ENCODE measurements at regions of chr17 and their contacts with region 1.

Region 1: DNA sequence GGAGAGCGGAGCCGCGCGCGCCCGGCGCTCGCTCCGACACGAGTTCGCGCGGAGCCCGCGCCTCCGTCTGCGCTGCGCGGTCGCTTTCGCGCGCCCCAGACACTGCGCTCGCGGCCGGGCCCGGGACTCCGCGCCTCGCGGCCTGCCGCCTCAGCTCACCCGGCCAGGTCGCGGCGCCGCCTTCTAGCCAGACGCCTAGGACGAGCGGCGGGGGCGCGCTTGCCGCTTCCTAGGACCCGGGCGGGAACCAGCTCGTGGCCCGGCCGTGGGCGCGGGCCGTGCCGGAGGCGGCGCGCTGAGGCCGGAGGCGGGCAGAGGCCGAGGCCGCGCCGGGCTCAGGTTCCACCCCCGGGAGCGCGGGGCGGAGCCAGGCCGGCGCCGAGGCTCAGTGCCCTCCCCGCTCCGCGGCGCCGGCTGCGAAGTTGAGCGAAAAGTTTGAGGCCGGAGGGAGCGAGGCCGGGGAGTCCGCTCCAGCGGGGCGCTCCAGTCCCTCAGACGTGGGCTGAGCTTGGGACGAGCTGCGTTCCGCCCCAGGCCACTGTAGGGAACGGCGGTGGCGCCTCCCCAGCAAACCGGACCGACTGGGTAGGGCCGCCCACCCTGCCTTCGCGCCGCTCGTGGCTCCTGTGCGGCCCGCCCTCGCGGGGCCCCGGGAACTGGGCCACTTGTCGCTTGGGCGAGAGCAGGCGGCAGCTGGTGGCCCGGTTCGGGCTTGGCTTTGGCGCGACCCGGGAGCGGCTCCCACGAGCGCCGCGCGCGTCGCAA is at the start of gene SPHK1:
- DNase-seq: peak; percentile 69 to 83
- H3K4me3 ChIP-seq: peak within 1 kb of the TSS; percentile 76
- H3K4me3 Mint-ChIP-seq: peak within 1 kb of the TSS; percentile 91
- H3K27ac Mint-ChIP-seq: peak within 1 kb of the TSS; percentile 23
- H3K4me1 ChIP-seq: peaks cover 14% of the 10 kb centered on the region
- H3K4me1 Mint-ChIP-seq: no peaks in the 10 kb centered on the region
- H3K27me3 ChIP-seq: peaks cover 1% of the 10 kb centered on the region; the same call in 1 of the 2 replicates
- H3K27me3 Mint-ChIP-seq: no peaks in the 10 kb centered on the region
- CTCF ChIP-seq: no peak
- total RNA-seq, gene SPHK1: 6.7 and 7.7 TPM in 2 replicates

Region 2: GRCh38 chr17:75950821-75951554 is 433.4 kb before region 1 on chr17:
- CTCF ChIA-PET with region 1: no interaction called
- POLR2A ChIA-PET with region 1: no interaction called
- intact Hi-C with region 1: no loop called
- DNase-seq: no peak
- H3K4me3 ChIP-seq: no peak overlapping the region
- H3K4me3 Mint-ChIP-seq: no peak overlapping the region
- H3K27ac Mint-ChIP-seq: no peak overlapping the region
- H3K4me1 ChIP-seq: no peaks in the 10 kb centered on the region
- H3K4me1 Mint-ChIP-seq: no peaks in the 10 kb centered on the region
- H3K27me3 ChIP-seq: no peaks in the 10 kb centered on the region
- H3K27me3 Mint-ChIP-seq: no peaks in the 10 kb centered on the region
- CTCF ChIP-seq: no peak

Region 3: GRCh38 chr17:76304226-76305134 is 79.9 kb before region 1 on chr17:
- CTCF ChIA-PET with region 1: interaction called, 7 read pairs
- POLR2A ChIA-PET with region 1: no interaction called
- intact Hi-C with region 1: loop called (anchors 1 kb)
- DNase-seq: no peak
- H3K4me3 ChIP-seq: no peak overlapping the region
- H3K4me3 Mint-ChIP-seq: no peak overlapping the region
- H3K27ac Mint-ChIP-seq: no peak overlapping the region
- H3K4me1 ChIP-seq: no peaks in the 10 kb centered on the region
- H3K4me1 Mint-ChIP-seq: peaks cover 6% of the 10 kb centered on the region
- H3K27me3 ChIP-seq: no peaks in the 10 kb centered on the region
- H3K27me3 Mint-ChIP-seq: no peaks in the 10 kb centered on the region
- CTCF ChIP-seq: no peak

Region 4: GRCh38 chr17:76353599-76354316 is 30.6 kb before region 1 on chr17 and contains the start of gene PRPSAP1:
- CTCF ChIA-PET with region 1: interaction called, 22 read pairs
- POLR2A ChIA-PET with region 1: no interaction called
- intact Hi-C with region 1: loop called (anchors 2 kb)
- DNase-seq: peak; percentile 89 to 91
- H3K4me3 ChIP-seq: peak within 1 kb of the TSS; percentile 83
- H3K4me3 Mint-ChIP-seq: peak within 1 kb of the TSS; percentile 94
- H3K27ac Mint-ChIP-seq: peak within 1 kb of the TSS; percentile 97
- H3K4me1 ChIP-seq: peaks cover 15% of the 10 kb centered on the region
- H3K4me1 Mint-ChIP-seq: peaks cover 10% of the 10 kb centered on the region
- H3K27me3 ChIP-seq: no peaks in the 10 kb centered on the region
- H3K27me3 Mint-ChIP-seq: no peaks in the 10 kb centered on the region
- CTCF ChIP-seq: peak; percentile 49 to 59
- total RNA-seq, gene PRPSAP1: 81.3 and 87.6 TPM in 2 replicates

Region 5: DNA sequence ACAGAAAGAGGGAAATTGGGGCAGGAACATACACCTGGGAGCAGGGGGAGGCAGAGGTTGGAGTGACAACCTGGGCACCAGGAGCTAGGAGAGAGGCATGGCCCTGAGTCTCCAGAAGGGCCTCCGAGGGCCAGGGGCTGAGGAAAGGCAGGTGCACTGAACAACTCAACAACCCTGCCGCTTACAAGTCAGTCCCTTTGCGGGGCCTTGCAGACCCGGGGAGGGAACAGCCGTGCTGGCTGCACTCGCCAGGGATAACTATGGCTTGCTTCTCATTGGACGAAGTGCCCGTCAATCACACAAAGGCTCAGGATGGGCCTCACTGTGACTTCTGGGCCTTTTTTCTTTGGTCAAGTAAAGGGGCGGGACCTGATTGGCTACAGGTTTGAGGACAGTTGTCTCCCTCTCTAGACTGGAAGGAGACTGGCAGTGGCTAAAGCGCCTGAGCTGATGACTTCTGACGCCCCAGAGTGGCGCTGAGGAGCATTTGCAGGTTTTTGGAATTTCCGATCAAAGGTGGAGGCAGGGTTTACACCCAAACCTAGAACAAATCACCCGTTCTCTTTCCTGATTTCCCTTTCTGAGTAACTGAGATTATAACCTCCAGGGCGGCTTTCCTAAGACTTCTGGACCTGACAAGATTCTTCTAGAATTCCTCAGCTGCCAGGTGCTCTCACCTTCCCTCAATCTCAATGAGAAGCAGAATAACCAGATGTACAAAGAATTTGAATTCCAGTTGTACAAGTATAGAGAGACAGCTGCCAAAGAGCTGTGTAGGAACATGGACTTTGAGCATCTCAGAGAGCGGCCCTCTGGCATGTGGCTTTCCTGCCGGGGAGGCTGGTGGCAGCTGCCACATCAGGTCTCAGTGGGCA is 228.8 kb after region 1 on chr17:
- CTCF ChIA-PET with region 1: no interaction called
- POLR2A ChIA-PET with region 1: no interaction called
- intact Hi-C with region 1: no loop called
- DNase-seq: peak; percentile 87 to 94
- H3K4me3 ChIP-seq: no peak overlapping the region
- H3K4me3 Mint-ChIP-seq: peak overlapping the region; percentile 49
- H3K27ac Mint-ChIP-seq: peak overlapping the region; percentile 91
- H3K4me1 ChIP-seq: peaks cover 33% of the 10 kb centered on the region
- H3K4me1 Mint-ChIP-seq: peaks cover 38% of the 10 kb centered on the region
- H3K27me3 ChIP-seq: no peaks in the 10 kb centered on the region
- H3K27me3 Mint-ChIP-seq: no peaks in the 10 kb centered on the region
- CTCF ChIP-seq: peak in 1 of 2 experiments; percentile 33

Region 6: DNA sequence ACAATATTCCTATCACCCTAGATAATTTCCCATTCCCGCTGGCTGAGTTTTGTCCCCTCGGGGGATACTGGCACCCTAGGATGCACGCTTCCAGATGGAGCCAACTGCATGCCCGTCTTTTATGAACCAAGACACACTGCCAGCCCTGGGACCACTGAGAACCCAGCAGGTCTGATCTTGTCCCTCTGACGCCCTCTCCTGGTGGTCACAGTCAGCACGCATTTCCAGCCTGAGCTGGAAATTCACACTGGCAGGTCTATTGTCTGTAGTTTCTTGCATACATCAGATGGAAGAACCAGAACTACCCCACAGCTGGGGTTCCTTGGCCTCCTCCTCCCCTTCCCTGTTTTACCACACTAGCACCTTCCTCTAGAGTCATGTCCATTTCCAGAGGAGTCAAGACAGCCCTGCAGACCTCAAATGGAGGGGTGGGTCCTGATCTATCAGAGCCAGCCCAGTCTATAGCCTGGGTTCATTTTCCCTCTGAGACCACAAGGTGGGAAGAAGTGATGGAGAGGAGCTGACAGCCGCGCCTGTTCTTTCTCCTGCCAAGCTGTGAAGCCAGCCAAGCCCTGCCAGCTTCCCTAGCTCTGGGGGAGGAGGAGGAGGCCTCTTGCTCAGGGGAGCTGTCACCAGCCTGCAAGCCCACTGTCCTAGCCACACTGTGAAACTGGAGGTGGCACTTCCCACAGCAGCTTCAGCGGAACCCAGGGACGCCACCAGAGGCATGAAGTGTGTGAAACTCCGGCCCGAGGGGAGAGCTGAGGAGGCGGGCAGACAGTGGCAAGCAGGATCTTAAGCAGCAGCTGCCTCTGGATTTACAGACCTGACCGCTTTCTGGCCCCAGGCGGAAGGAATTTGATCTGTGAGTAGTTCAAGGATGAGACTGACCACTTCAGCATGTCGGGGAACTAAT is 297.1 kb after region 1 on chr17:
- CTCF ChIA-PET with region 1: no interaction called
- POLR2A ChIA-PET with region 1: no interaction called
- intact Hi-C with region 1: no loop called
- DNase-seq: peak; percentile 80
- H3K4me3 ChIP-seq: no peak overlapping the region
- H3K4me3 Mint-ChIP-seq: no peak overlapping the region
- H3K27ac Mint-ChIP-seq: no peak overlapping the region
- H3K4me1 ChIP-seq: peaks cover 14% of the 10 kb centered on the region
- H3K4me1 Mint-ChIP-seq: no peaks in the 10 kb centered on the region
- H3K27me3 ChIP-seq: no peaks in the 10 kb centered on the region
- H3K27me3 Mint-ChIP-seq: no peaks in the 10 kb centered on the region
- CTCF ChIP-seq: peak; percentile 87 to 91

Measured in Caco-2 (cell line).